Esophagus squamous epithelium (tissue), 5 donors: ENCODE measurements at regions of chr3 and their contacts with region 1.

Region 1: GRCh38 chr3:63228087-63229023 is 49.8 kb upstream of the SYNPR start:
- DNase-seq: no peak
- H3K4me3 ChIP-seq: no peak overlapping the region
- H3K27ac ChIP-seq: no peak overlapping the region
- H3K4me1 ChIP-seq: peaks cover 0 to 9% (median 0%) of the 10 kb centered on the region in 3 donors
- H3K27me3 ChIP-seq: no peaks in the 10 kb centered on the region
- CTCF ChIP-seq: peak in 5 of 6 experiments; percentile 45 to 75 (median 58)
- POLR2A ChIP-seq: no peak

Region 2: DNA sequence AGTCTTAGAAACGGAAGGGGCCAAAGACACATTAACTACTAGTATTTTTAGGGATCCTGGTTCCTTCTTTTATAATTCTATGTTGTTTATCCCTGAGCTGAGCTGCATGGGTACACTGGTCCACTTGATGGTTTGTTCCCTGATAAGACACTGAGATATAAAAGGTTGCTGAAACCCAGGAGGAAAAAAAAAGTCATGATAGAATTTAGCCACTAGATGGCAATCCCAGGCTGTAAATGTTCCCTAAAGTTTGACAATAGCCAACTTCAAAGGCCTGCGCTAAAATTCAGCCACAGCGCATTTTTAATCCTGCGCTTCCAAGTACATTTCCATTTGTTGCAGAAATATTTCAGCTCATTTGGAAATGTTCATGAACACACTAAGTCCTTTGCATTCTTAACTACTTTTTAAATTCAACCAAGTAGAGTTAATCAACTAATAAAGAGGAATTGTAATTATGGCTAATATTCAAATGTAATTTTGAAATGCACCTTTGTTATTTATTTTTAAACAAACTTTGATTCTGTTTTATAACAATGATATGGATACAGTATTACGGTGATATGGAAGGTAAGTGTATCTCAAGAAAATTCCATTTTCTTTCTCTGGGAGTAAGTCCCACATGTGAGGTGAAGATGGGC is 605.7 kb before region 1 on chr3:
- intact Hi-C with region 1: loop called (anchors 10 kb)
- DNase-seq: no peak
- H3K4me3 ChIP-seq: no peak overlapping the region
- H3K27ac ChIP-seq: no peak overlapping the region
- H3K4me1 ChIP-seq: no peaks in the 10 kb centered on the region
- H3K27me3 ChIP-seq: peaks cover 0 to 24% (median 0%) of the 10 kb centered on the region in 4 donors
- CTCF ChIP-seq: peak in 5 of 6 experiments; percentile 50 to 68 (median 52)
- POLR2A ChIP-seq: no peak

Region 3: DNA sequence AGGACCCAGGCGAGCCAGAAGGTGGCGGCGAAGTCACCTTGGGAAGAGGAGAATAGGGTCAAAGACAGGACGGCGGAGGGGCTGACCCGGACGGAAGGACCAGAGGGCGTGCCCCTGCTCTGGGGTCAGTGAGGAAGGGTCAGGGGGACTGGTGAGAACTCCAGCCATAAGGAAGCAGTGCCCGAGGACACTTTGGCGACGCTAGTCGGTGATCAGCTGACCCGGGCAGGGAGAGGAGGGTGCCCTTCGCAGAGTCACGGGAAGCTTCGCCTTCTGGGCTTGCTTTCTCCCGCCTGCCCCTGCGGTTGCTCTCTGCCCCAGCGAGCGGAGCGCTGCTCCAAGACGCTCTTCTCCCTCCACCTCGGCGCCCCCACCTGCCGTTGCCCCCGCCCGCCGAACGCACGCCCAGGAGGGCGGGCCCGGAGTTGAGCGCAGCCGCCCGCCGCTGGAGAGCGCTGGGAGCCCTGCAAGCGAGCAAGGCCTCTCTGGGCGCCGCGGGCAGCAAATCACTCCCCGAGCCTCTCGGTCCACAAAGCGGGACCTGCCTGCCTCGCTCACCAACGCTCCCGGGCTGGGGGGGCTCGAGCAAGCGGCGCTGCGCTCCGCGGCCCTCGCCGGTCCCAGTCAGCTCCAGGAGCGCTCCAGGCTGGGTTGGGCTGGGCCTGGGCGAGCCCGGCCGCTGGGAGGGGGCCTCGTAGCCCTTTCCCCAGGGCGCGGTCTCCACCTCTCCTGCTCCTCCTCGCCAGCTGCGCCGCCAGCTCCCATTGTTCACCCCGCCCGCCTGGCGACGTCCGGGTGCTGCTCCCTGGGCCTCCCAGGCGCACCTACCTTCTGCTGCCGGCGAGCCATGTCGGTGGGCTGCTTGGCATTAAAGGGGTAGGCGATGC is 354.4 kb before region 1 on chr3:
- intact Hi-C with region 1: loop called (anchors 10 kb)
- DNase-seq: no peak
- H3K4me3 ChIP-seq: peak overlapping the region; percentile 3 to 63 (median 32)
- H3K27ac ChIP-seq: peak overlapping the region in 1 of 4 donors; percentile 63
- H3K4me1 ChIP-seq: peaks cover 7 to 23% (median 9%) of the 10 kb centered on the region in 3 donors
- H3K27me3 ChIP-seq: peaks cover 0 to 63% (median 12%) of the 10 kb centered on the region in 4 donors
- CTCF ChIP-seq: no peak
- POLR2A ChIP-seq: no peak

Region 4: GRCh38 chr3:63068012-63068645 is 160.2 kb before region 1 on chr3:
- intact Hi-C with region 1: no loop called
- DNase-seq: no peak
- H3K4me3 ChIP-seq: no peak overlapping the region
- H3K27ac ChIP-seq: no peak overlapping the region
- H3K4me1 ChIP-seq: no peaks in the 10 kb centered on the region
- H3K27me3 ChIP-seq: no peaks in the 10 kb centered on the region
- CTCF ChIP-seq: no peak
- POLR2A ChIP-seq: no peak

Region 5: GRCh38 chr3:63142676-63143075 is 85.7 kb before region 1 on chr3:
- intact Hi-C with region 1: no loop called
- DNase-seq: no peak
- H3K4me3 ChIP-seq: no peak overlapping the region
- H3K27ac ChIP-seq: no peak overlapping the region
- H3K4me1 ChIP-seq: no peaks in the 10 kb centered on the region
- H3K27me3 ChIP-seq: no peaks in the 10 kb centered on the region
- CTCF ChIP-seq: no peak
- POLR2A ChIP-seq: no peak

Region 6: GRCh38 chr3:63295816-63296215 is 67.5 kb after region 1 on chr3:
- intact Hi-C with region 1: no loop called
- DNase-seq: no peak
- H3K4me3 ChIP-seq: no peak overlapping the region
- H3K27ac ChIP-seq: no peak overlapping the region
- H3K4me1 ChIP-seq: no peaks in the 10 kb centered on the region
- H3K27me3 ChIP-seq: peaks cover 0 to 15% (median 0%) of the 10 kb centered on the region in 4 donors
- CTCF ChIP-seq: no peak
- POLR2A ChIP-seq: no peak